ENCODE measurements at regions of chr10 and their contacts with region 1.

Region 1: GRCh38 chr10:90871766-90872647 is at the start of gene RPP30:
- DNase-seq: peak; percentile 78 to 81 (median 79)
- H3K4me3 ChIP-seq: peak within 1 kb of the TSS; percentile 80 to 91
- H3K4me3 Mint-ChIP-seq: peak within 1 kb of the TSS; percentile 97 to 100 (median 98)
- H3K27ac ChIP-seq: peak within 1 kb of the TSS; percentile 65
- H3K27ac Mint-ChIP-seq: peak within 1 kb of the TSS; percentile 81 to 96 (median 95)
- H3K4me1 ChIP-seq: peaks cover 30% of the 10 kb centered on the region
- H3K4me1 Mint-ChIP-seq: peaks cover 21 to 41% (median 32%) of the 10 kb centered on the region in 4 donors
- H3K27me3 ChIP-seq: no peaks in the 10 kb centered on the region
- H3K27me3 Mint-ChIP-seq: peaks cover 13 to 18% of the 10 kb centered on the region in 2 donors
- total RNA-seq, gene RPP30: 32.3 to 33.2 TPM

Region 2: DNA sequence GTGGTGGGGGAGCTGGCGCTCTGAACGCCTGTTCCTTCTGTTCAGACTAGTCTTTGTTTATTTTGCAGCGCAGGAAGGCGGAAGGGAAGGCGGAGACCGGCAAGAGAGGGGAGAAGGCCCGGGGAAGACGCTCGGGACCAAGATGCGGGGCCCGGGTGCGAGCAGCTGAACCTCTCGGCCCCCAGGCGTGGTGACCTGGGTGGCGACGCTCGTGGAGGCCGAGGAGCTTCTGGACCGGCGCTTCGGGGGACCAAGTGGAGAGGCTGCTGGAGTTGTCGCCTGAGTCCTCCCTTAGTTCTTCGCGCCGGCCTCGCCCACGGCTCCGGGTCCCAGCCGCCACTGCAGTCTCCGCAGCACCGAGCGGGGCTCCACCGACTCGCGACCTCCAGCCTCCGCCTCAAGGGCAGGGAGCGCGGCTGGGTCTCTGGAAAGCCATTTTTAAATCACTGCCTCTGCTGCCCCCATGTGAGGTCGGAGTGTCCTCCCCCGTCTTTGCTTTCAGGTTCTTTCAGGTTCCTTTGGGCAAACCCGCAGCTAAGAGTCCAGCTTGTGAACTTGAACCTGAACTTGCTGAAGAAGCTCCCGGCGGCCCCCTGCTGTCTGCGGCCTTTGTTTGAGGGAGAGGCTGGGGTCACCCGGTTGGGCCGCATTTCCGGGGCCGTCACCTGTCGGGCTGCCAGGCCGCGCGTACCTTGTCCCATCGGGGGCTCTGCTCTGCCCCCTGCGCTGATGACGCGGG is 1034.7 kb before region 1 on chr10:
- CTCF ChIA-PET with region 1: no interaction called
- POLR2A ChIA-PET with region 1: no interaction called
- intact Hi-C with region 1: loop called (anchors 5 kb)
- DNase-seq: peak; percentile 28 to 50 (median 36)
- H3K4me3 ChIP-seq: peak overlapping the region; percentile 26 to 63
- H3K4me3 Mint-ChIP-seq: peak overlapping the region; percentile 87 to 94 (median 90)
- H3K27ac ChIP-seq: peak overlapping the region; percentile 30
- H3K27ac Mint-ChIP-seq: peak overlapping the region in 6 of 7 donors; percentile 28 to 96 (median 90)
- H3K4me1 ChIP-seq: peaks cover 7% of the 10 kb centered on the region
- H3K4me1 Mint-ChIP-seq: peaks cover 5 to 25% (median 13%) of the 10 kb centered on the region in 4 donors
- H3K27me3 ChIP-seq: no peaks in the 10 kb centered on the region
- H3K27me3 Mint-ChIP-seq: peaks cover 0 to 3% of the 10 kb centered on the region in 2 donors

Region 3: DNA sequence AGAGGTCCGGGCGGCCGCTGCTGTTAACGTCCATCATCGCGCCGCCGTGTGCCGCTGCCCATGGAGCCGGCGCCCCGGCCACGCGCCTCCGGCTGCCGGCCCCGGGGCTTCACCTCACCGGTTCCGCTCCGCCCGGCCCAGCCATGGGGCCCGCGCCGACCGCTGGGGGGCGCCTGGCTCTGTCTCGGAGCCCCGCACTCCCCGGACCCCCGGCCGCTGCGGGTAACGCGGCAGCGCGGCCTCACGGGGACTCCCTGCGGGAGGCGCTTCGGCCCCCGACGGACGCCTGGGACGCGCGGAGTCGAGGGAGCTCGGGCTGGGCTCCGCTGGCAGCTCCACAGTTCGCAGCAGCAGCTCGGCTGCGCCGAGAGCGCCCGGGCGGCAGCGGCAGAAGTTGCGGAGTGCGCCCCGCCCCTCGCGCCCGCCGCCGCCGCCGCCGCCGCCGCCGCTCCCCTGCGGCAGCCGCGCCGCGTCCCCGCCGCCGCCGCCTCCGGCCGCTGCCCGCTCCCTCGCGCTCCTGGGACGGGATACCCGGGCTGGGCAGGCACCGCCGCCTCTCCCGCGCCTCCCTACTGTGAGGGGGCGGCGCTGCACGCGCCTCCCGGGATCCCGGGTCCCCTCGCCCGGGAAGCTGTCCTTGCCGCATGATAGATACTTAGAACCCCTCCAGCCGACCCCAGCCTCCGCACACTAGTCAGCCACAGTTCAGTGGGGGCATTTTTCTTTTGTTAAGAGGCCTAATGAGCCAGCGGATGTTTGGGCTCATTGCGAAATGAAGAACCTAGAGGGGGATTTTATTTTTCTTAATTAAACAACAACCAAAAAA is 14.2 kb before region 1 on chr10 and contains the start of gene HTR7:
- CTCF ChIA-PET with region 1: interaction called, 36 read pairs
- POLR2A ChIA-PET with region 1: interaction called, 7 read pairs
- intact Hi-C with region 1: loop called (anchors 1 kb)
- DNase-seq: peak; percentile 56 to 73 (median 66)
- H3K4me3 ChIP-seq: peak within 1 kb of the TSS; percentile 6 to 40
- H3K4me3 Mint-ChIP-seq: peak within 1 kb of the TSS; percentile 89 to 94 (median 90)
- H3K27ac ChIP-seq: no peak within 1 kb of the TSS
- H3K27ac Mint-ChIP-seq: peak within 1 kb of the TSS; percentile 55 to 77 (median 65)
- H3K4me1 ChIP-seq: peaks cover 11% of the 10 kb centered on the region
- H3K4me1 Mint-ChIP-seq: peaks cover 6 to 8% (median 7%) of the 10 kb centered on the region in 4 donors
- H3K27me3 ChIP-seq: peaks cover 41% of the 10 kb centered on the region
- H3K27me3 Mint-ChIP-seq: peaks cover 28 to 35% of the 10 kb centered on the region in 2 donors
- total RNA-seq, gene HTR7: not detected

Region 4: GRCh38 chr10:91409869-91410637 is 538.0 kb after region 1 on chr10 and contains the start of gene HECTD2:
- CTCF ChIA-PET with region 1: no interaction called
- POLR2A ChIA-PET with region 1: no interaction called
- intact Hi-C with region 1: loop called (anchors 5 kb)
- DNase-seq: peak; percentile 78 to 90 (median 88)
- H3K4me3 ChIP-seq: peak within 1 kb of the TSS; percentile 88 to 92
- H3K4me3 Mint-ChIP-seq: peak within 1 kb of the TSS; percentile 88 to 97 (median 91)
- H3K27ac ChIP-seq: peak within 1 kb of the TSS; percentile 74
- H3K27ac Mint-ChIP-seq: peak within 1 kb of the TSS; percentile 78 to 97 (median 95)
- H3K4me1 ChIP-seq: peaks cover 20% of the 10 kb centered on the region
- H3K4me1 Mint-ChIP-seq: peaks cover 7 to 15% (median 11%) of the 10 kb centered on the region in 4 donors
- H3K27me3 ChIP-seq: no peaks in the 10 kb centered on the region
- H3K27me3 Mint-ChIP-seq: peaks cover 0 to under 1% of the 10 kb centered on the region in 2 donors
- total RNA-seq, gene HECTD2: 2.6 to 2.7 TPM